Sigmoid colon (tissue), 7 donors: ENCODE measurements at regions of chr19 and their contacts with region 1.

Region 1: DNA sequence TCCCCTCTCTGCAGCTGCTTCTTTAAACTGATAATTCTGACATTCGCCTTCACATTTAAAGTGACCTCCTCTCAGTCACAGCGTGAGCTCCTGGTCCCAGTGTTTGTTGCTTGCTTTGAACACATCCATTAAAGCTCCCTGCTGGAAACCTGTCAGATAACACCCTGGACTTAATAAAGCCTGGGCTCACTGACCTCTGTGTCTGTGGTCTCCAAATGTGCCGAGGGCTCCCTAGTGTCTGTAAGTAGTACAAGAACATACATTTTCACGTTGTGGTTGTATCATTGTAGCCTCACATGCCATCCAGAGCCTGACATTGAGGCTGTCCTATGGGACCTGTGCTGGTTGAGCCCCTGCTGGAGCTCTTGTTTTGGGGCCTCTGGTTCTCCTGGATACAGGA is 2.6 kb upstream of the PSG4 start:
- DNase-seq: no peak
- H3K4me3 ChIP-seq: no peak overlapping the region
- H3K27ac ChIP-seq: no peak overlapping the region
- H3K4me1 ChIP-seq: peaks cover 0 to 4% (median 0%) of the 10 kb centered on the region in 4 donors
- H3K27me3 ChIP-seq: no peaks in the 10 kb centered on the region
- CTCF ChIP-seq: no peak
- EP300 ChIP-seq: no peak
- POLR2A ChIP-seq: no peak

Region 2: GRCh38 chr19:43101950-43102349 is 106.0 kb before region 1 on chr19:
- intact Hi-C with region 1: loop called (anchors 2 kb)
- DNase-seq: no peak
- H3K4me3 ChIP-seq: no peak overlapping the region
- H3K27ac ChIP-seq: no peak overlapping the region
- H3K4me1 ChIP-seq: peaks cover 0 to 1% (median 0%) of the 10 kb centered on the region in 4 donors
- H3K27me3 ChIP-seq: no peaks in the 10 kb centered on the region
- CTCF ChIP-seq: no peak
- EP300 ChIP-seq: no peak
- POLR2A ChIP-seq: no peak